MCF 10A (cell line): ENCODE measurements at regions of chr12 and their contacts with region 1.

Region 1: GRCh38 chr12:110330544-110330943 is 49.5 kb downstream of the ATP2A2 start:
- DNase-seq: peak; percentile 46
- H3K4me3 Mint-ChIP-seq: no peak overlapping the region
- H3K27ac Mint-ChIP-seq: peak overlapping the region; percentile 46
- H3K4me1 Mint-ChIP-seq: peaks cover 6% of the 10 kb centered on the region
- H3K27me3 Mint-ChIP-seq: no peaks in the 10 kb centered on the region
- CTCF ChIP-seq: no peak

Region 2: GRCh38 chr12:109734219-109735000 is 596.1 kb before region 1 on chr12:
- CTCF ChIA-PET with region 1: no interaction called
- POLR2A ChIA-PET with region 1: no interaction called
- intact Hi-C with region 1: no loop called
- DNase-seq: no peak
- H3K4me3 Mint-ChIP-seq: no peak overlapping the region
- H3K27ac Mint-ChIP-seq: no peak overlapping the region
- H3K4me1 Mint-ChIP-seq: no peaks in the 10 kb centered on the region
- H3K27me3 Mint-ChIP-seq: no peaks in the 10 kb centered on the region
- CTCF ChIP-seq: no peak

Region 3: GRCh38 chr12:110314308-110314707 is 16.2 kb before region 1 on chr12:
- CTCF ChIA-PET with region 1: interaction called, 5 read pairs
- POLR2A ChIA-PET with region 1: interaction called, 11 read pairs
- intact Hi-C with region 1: no loop called
- DNase-seq: peak; percentile 71
- H3K4me3 Mint-ChIP-seq: peak overlapping the region; percentile 28
- H3K27ac Mint-ChIP-seq: peak overlapping the region; percentile 67
- H3K4me1 Mint-ChIP-seq: peaks cover 23% of the 10 kb centered on the region
- H3K27me3 Mint-ChIP-seq: no peaks in the 10 kb centered on the region
- CTCF ChIP-seq: no peak

Region 4: DNA sequence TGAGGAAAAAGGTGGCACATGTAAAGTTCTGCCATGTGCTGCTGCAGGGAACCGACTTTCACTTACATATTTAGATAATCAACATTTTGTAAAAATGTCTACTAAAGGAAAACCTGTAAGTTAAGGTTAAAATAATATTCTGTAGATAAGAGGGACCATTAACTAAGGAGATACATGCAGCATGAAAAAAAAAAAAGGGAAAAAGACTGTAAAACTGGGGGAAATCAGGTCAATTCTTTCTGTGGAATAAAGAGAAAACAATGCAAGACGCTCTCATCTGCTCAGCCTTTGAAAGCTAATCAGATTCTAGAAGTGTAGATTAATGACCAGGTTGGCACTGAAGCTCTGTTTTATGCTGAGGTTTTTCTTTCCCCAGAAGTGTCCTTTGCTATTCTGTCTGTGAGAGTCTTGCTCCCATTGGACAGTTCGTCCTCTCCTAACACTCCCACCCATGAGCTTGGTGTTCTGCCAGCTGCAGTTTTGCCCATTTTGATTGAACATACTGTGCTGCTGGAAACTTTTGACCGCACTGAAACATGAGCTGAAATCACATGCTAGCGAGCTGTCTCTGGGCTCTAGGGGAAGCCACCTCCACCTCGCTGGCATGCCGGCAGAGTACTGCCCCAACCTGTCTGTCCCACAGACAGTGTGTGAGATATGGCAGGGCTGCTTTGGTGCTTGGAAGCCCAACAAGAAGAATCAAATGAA is 212.9 kb after region 1 on chr12:
- CTCF ChIA-PET with region 1: no interaction called
- POLR2A ChIA-PET with region 1: no interaction called
- intact Hi-C with region 1: no loop called
- DNase-seq: peak; percentile 100
- H3K4me3 Mint-ChIP-seq: peak overlapping the region; percentile 60
- H3K27ac Mint-ChIP-seq: peak overlapping the region; percentile 90
- H3K4me1 Mint-ChIP-seq: peaks cover 54% of the 10 kb centered on the region
- H3K27me3 Mint-ChIP-seq: no peaks in the 10 kb centered on the region
- CTCF ChIP-seq: no peak